ENCODE measurements at regions of chr4 and their contacts with region 1.

Region 1: DNA sequence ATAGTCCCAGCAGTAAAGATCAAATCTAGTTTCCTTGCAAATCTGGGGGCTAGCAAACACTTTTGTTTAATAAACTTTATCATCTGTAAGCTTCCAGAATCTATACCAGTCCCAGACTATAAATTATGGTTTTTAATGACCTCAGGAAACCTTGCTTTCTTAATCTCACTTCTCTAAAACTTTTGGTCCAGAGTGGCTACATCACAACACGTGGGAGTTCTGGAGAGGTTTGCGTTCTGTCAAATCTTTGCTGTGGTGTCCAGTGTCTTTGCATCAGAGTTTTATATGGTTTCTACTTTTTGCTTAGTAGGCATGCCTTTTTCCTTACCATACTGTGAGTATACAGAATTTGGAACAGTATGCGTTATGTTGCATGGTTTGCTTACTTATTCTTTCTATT is 193.9 kb downstream of the ANK2 start:
- DNase-seq: no peak
- ATAC-seq: no peak
- H3K4me3 ChIP-seq: no peak overlapping the region
- H3K27ac ChIP-seq: no peak overlapping the region
- H3K4me1 ChIP-seq: no peaks in the 10 kb centered on the region
- H3K27me3 ChIP-seq: no peaks in the 10 kb centered on the region
- CTCF ChIP-seq: no peak

Region 2: GRCh38 chr4:112823606-112824005 is 419.7 kb before region 1 on chr4:
- CTCF ChIA-PET with region 1: no interaction called
- POLR2A ChIA-PET with region 1: no interaction called
- intact Hi-C with region 1: no loop called
- DNase-seq: no peak
- ATAC-seq: no peak
- H3K4me3 ChIP-seq: no peak overlapping the region
- H3K27ac ChIP-seq: no peak overlapping the region
- H3K4me1 ChIP-seq: no peaks in the 10 kb centered on the region
- H3K27me3 ChIP-seq: no peaks in the 10 kb centered on the region
- CTCF ChIP-seq: no peak

Region 3: GRCh38 chr4:113052379-113052951 is 190.8 kb before region 1 on chr4:
- CTCF ChIA-PET with region 1: no interaction called
- POLR2A ChIA-PET with region 1: no interaction called
- intact Hi-C with region 1: no loop called
- DNase-seq: peak; percentile 59
- ATAC-seq: peak; percentile 65
- H3K4me3 ChIP-seq: no peak overlapping the region
- H3K27ac ChIP-seq: no peak overlapping the region
- H3K4me1 ChIP-seq: peaks cover 9% of the 10 kb centered on the region
- H3K27me3 ChIP-seq: no peaks in the 10 kb centered on the region
- CTCF ChIP-seq: no peak

Region 4: DNA sequence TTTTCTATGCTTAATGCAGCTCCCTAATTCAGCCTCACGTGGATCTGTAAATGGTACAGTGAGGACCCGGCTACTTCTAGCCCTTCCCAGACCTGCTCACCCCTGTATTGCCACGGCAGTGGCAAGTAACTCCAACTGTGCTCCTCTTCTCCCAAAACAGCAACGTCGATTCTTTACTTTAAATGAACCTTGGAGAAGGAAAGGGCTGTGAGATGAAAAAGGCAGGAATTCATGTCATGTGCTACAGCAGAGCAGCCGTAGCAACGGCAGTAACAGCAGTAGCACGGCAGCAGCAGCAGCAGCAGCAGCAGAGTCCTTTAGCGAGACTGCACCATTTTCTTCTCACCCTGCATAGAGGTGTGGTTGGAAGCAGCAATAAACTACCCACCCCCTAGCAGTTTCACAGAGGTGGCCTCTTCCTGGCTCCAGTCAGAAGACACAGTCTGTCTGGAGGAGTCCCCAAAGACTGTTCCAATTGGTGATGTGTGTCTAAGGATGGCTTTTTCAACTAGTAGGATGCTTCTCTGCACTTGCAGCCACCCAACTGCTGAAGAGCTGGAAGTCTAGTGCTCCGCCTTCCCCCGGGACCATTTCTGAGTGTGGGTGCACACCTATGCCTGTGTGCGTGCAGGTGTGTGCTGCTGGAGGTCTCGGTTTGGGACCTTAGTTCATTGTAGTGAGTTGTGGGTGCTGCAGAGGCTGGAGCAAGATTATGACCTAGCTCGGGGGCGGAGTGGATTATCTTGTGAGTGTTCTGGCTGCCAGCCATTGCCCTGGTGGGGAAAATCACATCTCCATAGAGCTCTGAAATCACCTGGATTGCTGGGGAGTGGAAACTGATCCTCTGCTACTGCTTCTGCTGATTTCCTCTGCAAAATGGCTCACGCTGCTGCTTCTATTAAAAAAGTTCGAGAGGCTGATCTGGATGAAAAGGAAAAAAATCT is 126.6 kb before region 1 on chr4:
- CTCF ChIA-PET with region 1: no interaction called
- POLR2A ChIA-PET with region 1: interaction called, 11 read pairs
- intact Hi-C with region 1: no loop called
- DNase-seq: no peak
- ATAC-seq: no peak
- H3K4me3 ChIP-seq: no peak overlapping the region
- H3K27ac ChIP-seq: no peak overlapping the region
- H3K4me1 ChIP-seq: no peaks in the 10 kb centered on the region
- H3K27me3 ChIP-seq: 0 out of 2 replicates have a peak, but pooled peaks cover 6% of the 10 kb centered on the region
- CTCF ChIP-seq: no peak

Region 5: GRCh38 chr4:113328514-113328913 is 85.2 kb after region 1 on chr4:
- CTCF ChIA-PET with region 1: no interaction called
- POLR2A ChIA-PET with region 1: no interaction called
- intact Hi-C with region 1: no loop called
- DNase-seq: peak; percentile 26
- ATAC-seq: no peak
- H3K4me3 ChIP-seq: no peak overlapping the region
- H3K27ac ChIP-seq: no peak overlapping the region
- H3K4me1 ChIP-seq: no peaks in the 10 kb centered on the region
- H3K27me3 ChIP-seq: no peaks in the 10 kb centered on the region
- CTCF ChIP-seq: peak; percentile 61